ENCODE measurements at regions of chr11 and their contacts with region 1.

Region 1: GRCh38 chr11:85705805-85706204 is 19.8 kb upstream of the CCDC89 start:
- DNase-seq: no peak
- ATAC-seq: peak; percentile 38
- H3K4me3 ChIP-seq: no peak overlapping the region
- H3K27ac ChIP-seq: no peak overlapping the region
- H3K4me1 ChIP-seq: no peaks in the 10 kb centered on the region; the same call in 1 of the 2 replicates
- H3K27me3 ChIP-seq: no peaks in the 10 kb centered on the region
- CTCF ChIP-seq: no peak

Region 2: GRCh38 chr11:85627998-85628770 is 77.6 kb before region 1 on chr11 and contains the start of gene TMEM126B:
- CTCF ChIA-PET with region 1: no interaction called
- POLR2A ChIA-PET with region 1: interaction called, 16 read pairs
- intact Hi-C with region 1: no loop called
- DNase-seq: peak; percentile 99
- ATAC-seq: peak; percentile 97
- H3K4me3 ChIP-seq: peak within 1 kb of the TSS; percentile 83
- H3K27ac ChIP-seq: peak within 1 kb of the TSS; percentile 30
- H3K4me1 ChIP-seq: peaks cover 25% of the 10 kb centered on the region
- H3K27me3 ChIP-seq: no peaks in the 10 kb centered on the region
- CTCF ChIP-seq: no peak
- total RNA-seq, gene TMEM126B: 62.1 and 79.5 TPM in 2 replicates

Region 3: GRCh38 chr11:85772695-85773094 is 66.9 kb after region 1 on chr11:
- CTCF ChIA-PET with region 1: no interaction called
- POLR2A ChIA-PET with region 1: no interaction called
- intact Hi-C with region 1: no loop called
- DNase-seq: no peak
- ATAC-seq: no peak
- H3K4me3 ChIP-seq: no peak overlapping the region
- H3K27ac ChIP-seq: no peak overlapping the region
- H3K4me1 ChIP-seq: peaks cover 14% of the 10 kb centered on the region
- H3K27me3 ChIP-seq: no peaks in the 10 kb centered on the region
- CTCF ChIP-seq: no peak

Measured in PC-3 (cell line).